ENCODE measurements at regions of chr19 and their contacts with region 1.

Region 1: GRCh38 chr19:19531951-19532805 is 3.5 kb downstream of the YJEFN3 start:
- DNase-seq: peak; percentile 72 to 93 (median 85)
- ATAC-seq: peak; percentile 40 to 73 (median 60)
- H3K4me3 ChIP-seq: peak overlapping the region in 1 of 12 donors; percentile 3
- H3K27ac ChIP-seq: no peak overlapping the region
- H3K4me1 ChIP-seq: peaks cover 0 to 16% (median 7%) of the 10 kb centered on the region in 12 donors
- H3K27me3 ChIP-seq: peaks cover 0 to 5% (median 0%) of the 10 kb centered on the region in 9 donors
- CTCF ChIP-seq: peak; percentile 91 to 97 (median 94)
- POLR2A ChIP-seq: no peak

Region 2: GRCh38 chr19:19554074-19555023 is 22.2 kb after region 1 on chr19:
- intact Hi-C with region 1: loop called in 1 of 10 experiments (anchors 1 kb)
- DNase-seq: peak in 2 of 5 donors; percentile 51 to 58
- ATAC-seq: peak in 3 of 4 donors; percentile 48 to 63 (median 48)
- H3K4me3 ChIP-seq: no peak overlapping the region
- H3K27ac ChIP-seq: no peak overlapping the region
- H3K4me1 ChIP-seq: peaks cover 0 to 9% (median 0%) of the 10 kb centered on the region in 12 donors
- H3K27me3 ChIP-seq: peaks cover 0 to 18% (median 0%) of the 10 kb centered on the region in 9 donors
- CTCF ChIP-seq: peak; percentile 58 to 88 (median 72)
- POLR2A ChIP-seq: no peak

Region 3: GRCh38 chr19:19643158-19644053 is 111.2 kb after region 1 on chr19 and contains the start of gene GMIP:
- intact Hi-C with region 1: loop called (anchors 1 to 5 kb)
- DNase-seq: peak; percentile 71 to 91 (median 81)
- ATAC-seq: peak; percentile 36 to 85 (median 82)
- H3K4me3 ChIP-seq: peak within 1 kb of the TSS; percentile 41 to 96 (median 77)
- H3K27ac ChIP-seq: peak within 1 kb of the TSS in 10 of 12 donors; percentile 6 to 96 (median 44)
- H3K4me1 ChIP-seq: peaks cover 0 to 15% (median 7%) of the 10 kb centered on the region in 12 donors
- H3K27me3 ChIP-seq: no peaks in the 10 kb centered on the region
- CTCF ChIP-seq: peak; percentile 81 to 93 (median 90)
- POLR2A ChIP-seq: peak in 1 of 2 donors; percentile 51
- total RNA-seq, gene GMIP: 1.1 to 21.7 (median 2.5) TPM

Region 4: GRCh38 chr19:19937403-19937802 is 405.2 kb after region 1 on chr19:
- intact Hi-C with region 1: loop called in 3 of 10 experiments (anchors 5 to 10 kb)
- DNase-seq: no peak
- ATAC-seq: no peak
- H3K4me3 ChIP-seq: no peak overlapping the region
- H3K27ac ChIP-seq: no peak overlapping the region
- H3K4me1 ChIP-seq: no peaks in the 10 kb centered on the region
- H3K27me3 ChIP-seq: no peaks in the 10 kb centered on the region
- CTCF ChIP-seq: no peak
- POLR2A ChIP-seq: no peak

Region 5: GRCh38 chr19:19956434-19957075 is 424.4 kb after region 1 on chr19:
- intact Hi-C with region 1: loop called in 6 of 10 experiments (anchors 2 to 10 kb)
- DNase-seq: no peak
- ATAC-seq: no peak
- H3K4me3 ChIP-seq: no peak overlapping the region
- H3K27ac ChIP-seq: no peak overlapping the region
- H3K4me1 ChIP-seq: no peaks in the 10 kb centered on the region
- H3K27me3 ChIP-seq: peaks cover 0 to 8% (median 0%) of the 10 kb centered on the region in 9 donors
- CTCF ChIP-seq: no peak
- POLR2A ChIP-seq: no peak

Region 6: DNA sequence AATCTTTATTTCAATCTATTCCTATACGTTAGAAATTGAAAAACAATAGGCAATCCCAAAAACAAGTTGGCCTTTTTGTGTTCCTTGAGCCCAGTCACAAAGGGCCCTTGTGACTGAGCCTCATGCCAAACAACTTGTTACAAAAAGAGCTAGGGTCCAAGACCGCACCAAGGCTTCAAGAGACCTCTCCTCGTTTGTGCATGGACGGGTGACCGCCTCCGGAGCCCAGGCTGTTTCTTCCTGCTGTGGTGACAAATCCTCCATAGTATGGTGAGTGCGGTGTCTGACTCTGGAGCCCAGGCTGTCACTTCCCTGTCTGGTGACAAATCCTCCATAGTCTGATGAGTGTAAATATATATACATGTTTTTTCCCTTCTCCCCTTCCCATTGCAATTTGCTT is 432.2 kb after region 1 on chr19:
- intact Hi-C with region 1: loop called in 6 of 10 experiments (anchors 2 to 10 kb)
- DNase-seq: no peak
- ATAC-seq: no peak
- H3K4me3 ChIP-seq: no peak overlapping the region
- H3K27ac ChIP-seq: no peak overlapping the region
- H3K4me1 ChIP-seq: no peaks in the 10 kb centered on the region
- H3K27me3 ChIP-seq: no peaks in the 10 kb centered on the region
- CTCF ChIP-seq: no peak
- POLR2A ChIP-seq: no peak

Region 7: GRCh38 chr19:20278342-20278741 is 746.2 kb after region 1 on chr19:
- intact Hi-C with region 1: loop called in 1 of 10 experiments (anchors 10 kb)
- DNase-seq: peak in 1 of 5 donors; percentile 25
- ATAC-seq: no peak
- H3K4me3 ChIP-seq: peak overlapping the region in 1 of 12 donors; percentile 2
- H3K27ac ChIP-seq: no peak overlapping the region
- H3K4me1 ChIP-seq: peaks cover 0 to 8% (median 0%) of the 10 kb centered on the region in 12 donors
- H3K27me3 ChIP-seq: no peaks in the 10 kb centered on the region
- CTCF ChIP-seq: peak in 4 of 12 donors; percentile 27 to 79 (median 48)
- POLR2A ChIP-seq: no peak